Mammary epithelial cell (primary cell): ENCODE measurements at regions of chr20 and their contacts with region 1.

Region 1: DNA sequence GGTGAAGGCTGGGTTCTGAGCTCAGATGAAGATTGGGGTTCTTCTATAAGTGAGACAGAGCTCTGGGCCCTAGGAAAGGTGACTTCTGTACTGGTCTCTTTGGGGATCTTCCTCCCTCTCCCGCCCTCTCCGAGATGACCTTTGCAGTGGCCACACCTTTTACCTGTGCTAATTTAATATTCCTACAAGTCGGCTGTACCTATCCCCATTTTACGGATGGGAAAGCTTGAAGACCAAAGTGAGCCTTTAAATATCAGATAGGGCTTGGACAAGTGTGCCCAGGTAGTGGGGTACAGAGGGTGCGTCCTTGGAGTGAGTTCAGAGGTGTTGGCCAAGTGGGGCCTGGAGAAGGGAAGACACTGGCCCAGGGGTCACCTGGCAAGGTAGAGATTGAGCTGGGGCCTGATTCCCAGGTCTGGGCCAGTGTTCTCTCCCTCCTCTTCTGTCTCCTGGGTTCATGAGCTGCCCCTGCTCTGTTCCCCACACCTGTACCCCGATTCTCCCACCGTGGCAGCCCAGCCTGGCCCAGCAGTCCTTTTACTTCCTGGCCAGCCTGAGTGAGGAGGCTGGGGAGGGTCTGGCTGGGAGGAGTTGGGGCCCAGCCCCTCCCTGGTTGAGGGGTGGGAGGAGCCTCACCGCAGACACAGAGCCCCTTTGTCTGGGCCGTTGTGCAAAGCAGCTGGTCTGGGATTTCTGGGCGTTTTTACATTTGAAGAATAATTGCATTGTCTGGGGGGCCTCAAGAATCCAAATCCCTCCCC is 152.1 kb upstream of the RNF24 start:
- DNase-seq: no peak
- H3K4me3 ChIP-seq: no peak overlapping the region
- H3K27ac ChIP-seq: no peak overlapping the region
- H3K4me1 ChIP-seq: peaks cover 31% of the 10 kb centered on the region
- H3K27me3 ChIP-seq: no peaks in the 10 kb centered on the region
- CTCF ChIP-seq: no peak

Region 2: DNA sequence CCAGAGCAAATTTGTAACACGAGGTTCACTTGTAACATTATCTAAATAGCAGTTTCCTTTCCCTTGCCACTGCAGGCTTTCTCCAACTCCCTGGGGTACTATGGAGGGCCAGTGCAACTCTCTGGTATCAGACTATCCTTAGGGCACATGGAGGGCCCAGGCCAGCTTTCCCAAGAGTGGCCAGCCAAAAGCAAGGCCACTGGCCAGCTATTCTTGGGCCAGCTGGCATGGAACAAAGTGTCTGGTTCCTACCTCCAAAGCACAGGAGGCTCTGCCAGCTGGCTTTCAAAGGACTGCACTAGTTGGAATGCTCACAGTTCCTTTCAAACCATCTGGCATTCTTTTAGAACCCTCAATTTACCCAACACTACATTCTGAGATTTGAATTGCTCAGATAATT is 160.8 kb before region 1 on chr20:
- CTCF ChIA-PET with region 1: no interaction called
- dilution Hi-C with region 1: loop called (anchors 5 kb)
- in situ Hi-C with region 1: no loop called
- intact Hi-C with region 1: no loop called
- DNase-seq: no peak
- H3K4me3 ChIP-seq: no peak overlapping the region
- H3K27ac ChIP-seq: no peak overlapping the region
- H3K4me1 ChIP-seq: no peaks in the 10 kb centered on the region
- H3K27me3 ChIP-seq: no peaks in the 10 kb centered on the region
- CTCF ChIP-seq: no peak

Region 3: DNA sequence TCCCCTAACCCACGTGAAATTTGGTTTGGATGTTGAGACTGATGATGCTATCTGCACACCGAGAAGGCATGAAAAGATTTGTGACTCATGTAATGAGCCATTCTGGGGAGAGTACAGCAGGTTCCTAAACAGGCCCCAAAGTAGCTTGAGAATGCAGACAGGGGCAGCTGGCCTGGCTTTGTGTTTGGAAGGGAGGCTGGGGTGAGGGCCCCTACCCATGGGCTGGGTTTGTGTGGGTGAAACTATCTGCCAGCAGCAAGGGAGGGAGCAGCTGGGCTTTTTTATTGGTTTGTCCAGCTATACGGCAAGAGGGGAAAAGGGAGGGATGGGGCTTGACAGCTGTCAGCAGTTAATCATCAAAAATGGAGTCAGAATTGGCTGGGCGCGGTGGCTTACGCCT is 65.1 kb before region 1 on chr20:
- CTCF ChIA-PET with region 1: no interaction called
- dilution Hi-C with region 1: loop called (anchors 5 kb)
- in situ Hi-C with region 1: no loop called
- intact Hi-C with region 1: no loop called
- DNase-seq: peak; percentile 78
- H3K4me3 ChIP-seq: no peak overlapping the region
- H3K27ac ChIP-seq: peak overlapping the region; percentile 1
- H3K4me1 ChIP-seq: peaks cover 5% of the 10 kb centered on the region
- H3K27me3 ChIP-seq: no peaks in the 10 kb centered on the region
- CTCF ChIP-seq: no peak

Region 4: DNA sequence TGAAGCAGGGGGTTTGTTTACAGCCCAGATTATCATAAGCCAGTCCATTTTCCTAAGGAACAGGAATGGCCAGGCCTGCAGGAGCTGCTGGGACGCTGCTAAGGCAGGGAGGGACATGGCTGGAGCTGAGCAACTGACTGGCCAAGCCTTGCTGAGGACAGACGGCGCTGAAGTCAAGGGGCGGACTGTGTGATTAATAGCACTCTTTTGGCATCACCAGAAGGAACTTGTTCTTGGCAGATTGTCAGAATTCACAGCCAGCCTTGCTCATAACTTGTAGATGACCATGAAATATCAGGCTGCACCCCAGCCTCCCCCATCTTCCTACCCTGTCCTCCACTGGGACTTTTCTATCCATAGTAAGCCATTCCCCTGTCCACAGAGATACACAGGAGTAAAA is 66.7 kb after region 1 on chr20:
- CTCF ChIA-PET with region 1: no interaction called
- dilution Hi-C with region 1: no loop called
- in situ Hi-C with region 1: no loop called
- intact Hi-C with region 1: no loop called
- DNase-seq: peak; percentile 45
- H3K4me3 ChIP-seq: no peak overlapping the region
- H3K27ac ChIP-seq: no peak overlapping the region
- H3K4me1 ChIP-seq: no peaks in the 10 kb centered on the region
- H3K27me3 ChIP-seq: no peaks in the 10 kb centered on the region
- CTCF ChIP-seq: no peak

Region 5: DNA sequence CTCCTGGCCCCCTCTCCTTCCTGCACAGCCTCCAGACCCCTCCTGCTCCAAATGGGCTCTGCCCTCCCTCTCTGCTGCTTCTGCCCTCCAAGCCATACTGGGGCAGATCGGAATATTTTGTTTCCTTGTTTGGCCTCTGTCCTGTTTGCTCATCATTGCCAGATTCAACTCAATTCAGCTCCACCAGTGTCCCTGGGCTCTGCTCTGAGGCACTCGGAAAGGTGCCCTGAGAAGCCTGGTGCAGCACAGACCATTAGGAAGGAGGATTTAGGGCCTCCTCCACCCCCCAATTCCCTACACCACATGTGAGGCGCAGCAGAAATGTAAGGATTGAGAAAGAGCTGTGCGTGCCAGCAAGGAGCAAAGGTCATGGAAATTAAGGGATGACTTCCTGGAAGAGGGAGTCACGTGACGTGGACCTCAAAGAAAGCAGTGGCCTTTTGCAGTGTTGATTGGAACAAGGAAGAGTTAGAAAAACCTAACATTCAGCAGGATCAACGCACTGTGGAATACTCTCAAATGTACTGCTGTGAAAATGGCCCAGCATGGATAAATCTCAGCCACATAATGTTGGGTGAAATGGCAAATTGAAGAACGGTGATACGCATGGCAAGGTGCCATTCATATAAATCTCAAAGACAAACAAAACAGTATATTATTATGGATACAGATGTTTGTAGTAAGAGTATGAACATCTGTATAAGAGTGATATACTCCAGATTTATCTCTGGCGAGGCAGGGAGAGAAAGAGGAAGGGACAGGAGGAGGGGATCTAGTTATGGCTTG is 77.5 kb after region 1 on chr20:
- CTCF ChIA-PET with region 1: no interaction called
- dilution Hi-C with region 1: loop called (anchors 5 kb)
- in situ Hi-C with region 1: no loop called
- intact Hi-C with region 1: no loop called
- DNase-seq: no peak
- H3K4me3 ChIP-seq: no peak overlapping the region
- H3K27ac ChIP-seq: no peak overlapping the region
- H3K4me1 ChIP-seq: peaks cover 3% of the 10 kb centered on the region
- H3K27me3 ChIP-seq: no peaks in the 10 kb centered on the region
- CTCF ChIP-seq: no peak